GM12878 (cell line): ENCODE measurements at regions of chr17 and their contacts with region 1.

Region 1: DNA sequence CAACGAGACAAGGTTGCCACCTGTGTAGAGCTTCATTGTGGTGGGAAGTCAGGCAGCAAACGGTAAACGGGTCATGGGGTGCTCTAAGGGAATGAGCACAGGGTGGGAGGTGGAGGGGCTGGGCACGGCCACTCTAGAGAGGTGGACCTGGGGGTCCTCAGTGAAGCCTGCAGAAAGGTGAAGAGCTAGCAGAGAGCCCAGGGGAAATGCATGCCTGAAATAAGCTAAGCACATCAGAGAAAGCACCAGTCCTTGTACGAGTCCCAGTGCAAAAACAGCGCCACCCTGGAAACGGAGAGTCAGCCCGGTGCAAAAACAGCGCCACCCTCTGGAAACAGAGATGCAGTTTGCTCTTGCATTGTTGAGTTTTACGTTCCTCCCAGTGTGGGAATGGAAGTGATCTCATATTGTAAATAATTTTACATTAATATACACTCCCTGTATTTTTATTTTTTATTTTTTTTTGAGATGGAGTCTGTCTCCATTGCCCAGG is 65.0 kb downstream of the TBC1D16 start:
- DNase-seq: no peak
- ATAC-seq: peak; percentile 84
- H3K4me3 ChIP-seq: no peak overlapping the region
- H3K27ac ChIP-seq: no peak overlapping the region
- H3K4me1 ChIP-seq: no peaks in the 10 kb centered on the region
- H3K27me3 ChIP-seq: peaks cover 3 to 4% of the 10 kb centered on the region in 2 experiments; a peak in 2 of 4 replicates
- CTCF ChIP-seq: peak; percentile 70 to 94 (median 80)
- EP300 ChIP-seq: no peak
- POLR2A ChIP-seq: no peak
- RAD21 ChIP-seq: peak; percentile 77

Region 2: GRCh38 chr17:79728226-79728907 is 242.3 kb before region 1 on chr17:
- CTCF ChIA-PET with region 1: no interaction called
- POLR2A ChIA-PET with region 1: no interaction called
- RAD21 ChIA-PET with region 1: no interaction called
- SMC1A ChIA-PET with region 1: no interaction called
- in situ Hi-C with region 1: no loop called
- intact Hi-C with region 1: no loop called
- DNase-seq: peak; percentile 86
- ATAC-seq: peak; percentile 84
- H3K4me3 ChIP-seq: peak overlapping the region; percentile 58; the same call in 1 of the 2 replicates
- H3K27ac ChIP-seq: peak overlapping the region; percentile 58; the same call in 1 of the 2 replicates
- H3K4me1 ChIP-seq: peaks cover 3% of the 10 kb centered on the region
- H3K27me3 ChIP-seq: no peaks in the 10 kb centered on the region
- CTCF ChIP-seq: no peak
- EP300 ChIP-seq: no peak
- POLR2A ChIP-seq: no peak
- RAD21 ChIP-seq: no peak

Region 3: DNA sequence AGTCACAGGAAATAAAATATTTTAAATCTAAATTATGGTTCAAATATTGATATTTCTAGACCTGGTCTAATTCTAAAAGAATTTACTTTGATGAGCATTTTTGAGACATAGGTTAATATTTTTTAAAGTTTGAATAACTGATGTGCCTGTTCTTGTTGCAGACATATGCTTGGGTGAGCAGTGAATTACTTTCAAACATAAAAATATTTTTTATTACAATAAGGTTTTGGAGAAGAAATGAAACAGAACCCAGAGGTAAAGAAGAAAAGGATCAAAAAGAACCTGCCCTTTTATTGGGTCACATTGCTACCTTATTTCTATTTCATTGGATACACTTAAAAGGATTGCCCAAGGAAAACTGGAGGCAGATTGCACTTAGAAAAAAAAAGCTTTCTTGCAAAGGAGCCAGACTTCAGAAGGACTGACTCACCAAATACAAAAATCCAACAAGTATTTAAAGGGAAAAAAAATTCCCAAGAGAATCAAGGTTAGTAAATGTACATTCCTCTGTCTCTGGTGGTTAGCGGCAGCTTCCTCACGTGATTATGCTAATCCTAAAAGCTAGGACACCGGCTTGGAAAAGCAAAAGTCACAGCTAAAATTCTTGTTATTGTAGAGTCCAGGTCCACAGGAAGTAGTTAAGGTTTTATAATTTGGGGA is 221.3 kb before region 1 on chr17:
- CTCF ChIA-PET with region 1: interaction called, 8 read pairs
- POLR2A ChIA-PET with region 1: no interaction called
- RAD21 ChIA-PET with region 1: interaction called, 5 read pairs
- SMC1A ChIA-PET with region 1: no interaction called
- in situ Hi-C with region 1: no loop called
- intact Hi-C with region 1: loop called (anchors 2 kb)
- DNase-seq: no peak
- ATAC-seq: no peak
- H3K4me3 ChIP-seq: no peak overlapping the region
- H3K27ac ChIP-seq: no peak overlapping the region
- H3K4me1 ChIP-seq: peaks cover 13% of the 10 kb centered on the region
- H3K27me3 ChIP-seq: peaks cover 0 to 4% of the 10 kb centered on the region in 2 experiments; a peak in 2 of 4 replicates
- CTCF ChIP-seq: no peak
- EP300 ChIP-seq: no peak
- POLR2A ChIP-seq: no peak
- RAD21 ChIP-seq: no peak

Region 4: DNA sequence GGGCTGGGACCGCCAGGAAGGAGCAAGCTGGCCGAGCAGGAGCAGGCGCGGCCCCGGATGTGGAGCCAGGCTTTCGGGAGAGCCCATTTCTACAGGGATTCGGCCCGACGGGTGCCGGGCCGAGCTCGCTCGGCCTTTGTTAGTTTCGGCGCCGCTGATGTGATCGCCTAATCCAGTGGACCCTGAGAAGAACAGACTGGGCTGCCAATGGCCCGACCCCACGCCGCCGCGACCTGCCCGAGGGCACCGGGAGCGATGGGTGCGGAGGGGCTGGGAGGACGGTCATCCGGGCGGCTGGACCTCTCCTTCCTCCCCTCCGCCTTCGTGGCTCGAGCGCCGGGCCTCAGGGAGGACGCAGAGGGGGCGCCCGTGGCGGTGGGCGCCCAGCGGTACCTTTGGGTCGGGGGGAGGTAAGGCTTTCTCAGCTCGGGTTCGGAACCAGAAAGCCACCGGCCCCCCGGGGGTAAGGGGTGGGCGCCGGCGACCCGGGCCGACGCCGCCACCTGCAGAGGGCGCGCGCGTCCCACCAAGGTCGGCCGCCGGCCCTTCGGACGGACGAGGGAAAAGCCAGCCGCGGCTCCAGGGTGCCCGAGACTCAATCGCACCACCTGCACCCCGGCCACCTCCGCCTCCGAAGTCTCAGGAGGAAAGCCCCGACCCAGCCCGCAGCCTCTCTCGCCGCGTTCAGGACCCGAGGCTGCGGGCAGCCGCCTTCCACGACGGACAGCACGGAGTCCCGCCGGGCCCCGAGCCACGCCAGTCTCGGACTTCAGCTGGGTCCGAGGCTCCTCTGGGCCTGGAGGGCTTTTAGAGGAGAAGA is 180.9 kb before region 1 on chr17:
- CTCF ChIA-PET with region 1: interaction called, 21 read pairs
- POLR2A ChIA-PET with region 1: no interaction called
- RAD21 ChIA-PET with region 1: interaction called, 8 read pairs
- SMC1A ChIA-PET with region 1: interaction called, 11 read pairs
- in situ Hi-C with region 1: loop called (anchors 5 kb)
- intact Hi-C with region 1: loop called (anchors 2 kb)
- DNase-seq: no peak
- ATAC-seq: peak; percentile 94
- H3K4me3 ChIP-seq: no peak overlapping the region
- H3K27ac ChIP-seq: no peak overlapping the region
- H3K4me1 ChIP-seq: no peaks in the 10 kb centered on the region; the same call in 1 of the 2 replicates
- H3K27me3 ChIP-seq: peaks cover 14 to 16% of the 10 kb centered on the region in 2 experiments; a peak in 3 of 4 replicates
- CTCF ChIP-seq: peak; percentile 50 to 82 (median 72)
- EP300 ChIP-seq: no peak
- POLR2A ChIP-seq: no peak
- RAD21 ChIP-seq: peak; percentile 65

Region 5: GRCh38 chr17:79810130-79811010 is 160.3 kb before region 1 on chr17:
- CTCF ChIA-PET with region 1: interaction called, 11 read pairs
- POLR2A ChIA-PET with region 1: no interaction called
- RAD21 ChIA-PET with region 1: interaction called, 8 read pairs
- SMC1A ChIA-PET with region 1: interaction called, 3 read pairs
- in situ Hi-C with region 1: no loop called
- intact Hi-C with region 1: loop called (anchors 1 kb)
- DNase-seq: no peak
- ATAC-seq: peak; percentile 95
- H3K4me3 ChIP-seq: peak overlapping the region; percentile 60; the same call in 1 of the 2 replicates
- H3K27ac ChIP-seq: no peak overlapping the region
- H3K4me1 ChIP-seq: peaks cover 36% of the 10 kb centered on the region
- H3K27me3 ChIP-seq: peaks cover 35 to 46% of the 10 kb centered on the region in 2 experiments
- CTCF ChIP-seq: no peak
- EP300 ChIP-seq: no peak
- POLR2A ChIP-seq: no peak
- RAD21 ChIP-seq: no peak

Region 6: DNA sequence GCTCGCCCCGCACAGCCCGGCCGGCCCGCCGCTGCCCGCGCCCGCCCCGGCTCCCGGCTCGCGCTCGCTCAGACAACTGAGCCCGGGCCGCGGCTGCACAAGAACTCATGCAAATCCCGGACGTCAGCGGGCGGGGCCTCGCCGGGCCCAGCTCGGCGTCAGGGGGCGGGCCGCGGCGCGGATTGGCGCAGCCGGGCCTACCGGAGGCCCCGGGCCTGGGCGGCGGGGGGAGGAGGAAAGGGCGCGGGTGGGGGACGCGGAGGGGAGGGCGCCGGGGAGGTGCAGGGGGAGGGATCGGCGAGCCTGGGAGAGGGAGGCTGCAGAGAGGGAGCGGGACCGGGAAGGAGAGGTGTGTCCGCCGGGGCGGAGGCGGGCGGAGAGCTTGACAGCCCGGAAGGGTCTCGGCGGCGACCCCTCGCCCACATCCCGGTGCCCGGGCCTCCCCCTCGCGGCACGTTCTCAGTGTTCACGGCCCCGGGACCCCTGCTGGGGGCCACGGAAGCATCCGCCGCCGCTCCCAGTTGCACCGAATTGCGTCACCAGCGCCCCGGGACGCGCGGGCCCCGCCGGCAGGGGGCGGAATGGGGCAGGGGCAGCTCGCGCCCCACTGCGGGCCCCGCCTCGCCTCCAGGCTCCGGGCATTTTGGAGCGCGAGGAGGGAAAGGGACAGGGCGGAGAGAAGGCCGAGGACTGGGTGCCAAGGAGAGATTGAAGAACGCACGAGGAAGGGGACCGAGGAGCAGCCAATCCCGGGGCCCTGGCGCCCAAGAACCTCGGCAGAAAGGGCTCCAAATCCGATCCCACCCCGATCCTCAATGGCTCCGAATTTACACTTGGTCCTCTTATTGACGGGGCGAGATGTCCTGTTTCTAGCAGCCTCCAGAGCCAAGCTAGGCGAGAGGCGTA is 131.0 kb before region 1 on chr17 and contains the start of gene CBX4:
- CTCF ChIA-PET with region 1: interaction called, 11 read pairs
- POLR2A ChIA-PET with region 1: no interaction called
- RAD21 ChIA-PET with region 1: interaction called, 11 read pairs
- SMC1A ChIA-PET with region 1: interaction called, 5 read pairs
- in situ Hi-C with region 1: no loop called
- intact Hi-C with region 1: loop called (anchors 10 kb)
- DNase-seq: no peak
- ATAC-seq: peak; percentile 75
- H3K4me3 ChIP-seq: peak within 1 kb of the TSS; percentile 95
- H3K27ac ChIP-seq: peak within 1 kb of the TSS; percentile 69
- H3K4me1 ChIP-seq: peaks cover 21% of the 10 kb centered on the region
- H3K27me3 ChIP-seq: peaks cover 22 to 32% of the 10 kb centered on the region in 2 experiments
- CTCF ChIP-seq: peak; percentile 58 to 74 (median 64); a peak in 5 of 6 replicates
- EP300 ChIP-seq: no peak
- POLR2A ChIP-seq: peak; percentile 91
- RAD21 ChIP-seq: peak; percentile 18; the same call in 1 of the 2 replicates
- polyA plus RNA-seq, gene CBX4: 0.69 to 1.2 TPM

Region 7: GRCh38 chr17:79844869-79845600 is 125.6 kb before region 1 on chr17:
- CTCF ChIA-PET with region 1: interaction called, 10 read pairs
- POLR2A ChIA-PET with region 1: no interaction called
- RAD21 ChIA-PET with region 1: interaction called, 11 read pairs
- SMC1A ChIA-PET with region 1: interaction called, 5 read pairs
- in situ Hi-C with region 1: no loop called
- intact Hi-C with region 1: loop called (anchors 10 kb)
- DNase-seq: no peak
- ATAC-seq: peak; percentile 89
- H3K4me3 ChIP-seq: no peak overlapping the region
- H3K27ac ChIP-seq: no peak overlapping the region
- H3K4me1 ChIP-seq: peaks cover 8% of the 10 kb centered on the region
- H3K27me3 ChIP-seq: peaks cover 22 to 45% of the 10 kb centered on the region in 2 experiments
- CTCF ChIP-seq: peak; percentile 42 to 92 (median 70); a peak in 5 of 6 replicates
- EP300 ChIP-seq: no peak
- POLR2A ChIP-seq: no peak
- RAD21 ChIP-seq: peak; percentile 59